Ovary (tissue), 10 donors: ENCODE measurements at regions of chr17 and their contacts with region 1.

Region 1: GRCh38 chr17:76307299-76307965 is 644 bp downstream of the QRICH2 start:
- DNase-seq: peak in 1 of 5 donors; percentile 34
- H3K4me3 ChIP-seq: no peak overlapping the region
- H3K27ac ChIP-seq: no peak overlapping the region
- H3K4me1 ChIP-seq: no peaks in the 10 kb centered on the region
- H3K27me3 ChIP-seq: no peaks in the 10 kb centered on the region
- CTCF ChIP-seq: no peak
- EP300 ChIP-seq: no peak
- POLR2A ChIP-seq: no peak

Region 2: DNA sequence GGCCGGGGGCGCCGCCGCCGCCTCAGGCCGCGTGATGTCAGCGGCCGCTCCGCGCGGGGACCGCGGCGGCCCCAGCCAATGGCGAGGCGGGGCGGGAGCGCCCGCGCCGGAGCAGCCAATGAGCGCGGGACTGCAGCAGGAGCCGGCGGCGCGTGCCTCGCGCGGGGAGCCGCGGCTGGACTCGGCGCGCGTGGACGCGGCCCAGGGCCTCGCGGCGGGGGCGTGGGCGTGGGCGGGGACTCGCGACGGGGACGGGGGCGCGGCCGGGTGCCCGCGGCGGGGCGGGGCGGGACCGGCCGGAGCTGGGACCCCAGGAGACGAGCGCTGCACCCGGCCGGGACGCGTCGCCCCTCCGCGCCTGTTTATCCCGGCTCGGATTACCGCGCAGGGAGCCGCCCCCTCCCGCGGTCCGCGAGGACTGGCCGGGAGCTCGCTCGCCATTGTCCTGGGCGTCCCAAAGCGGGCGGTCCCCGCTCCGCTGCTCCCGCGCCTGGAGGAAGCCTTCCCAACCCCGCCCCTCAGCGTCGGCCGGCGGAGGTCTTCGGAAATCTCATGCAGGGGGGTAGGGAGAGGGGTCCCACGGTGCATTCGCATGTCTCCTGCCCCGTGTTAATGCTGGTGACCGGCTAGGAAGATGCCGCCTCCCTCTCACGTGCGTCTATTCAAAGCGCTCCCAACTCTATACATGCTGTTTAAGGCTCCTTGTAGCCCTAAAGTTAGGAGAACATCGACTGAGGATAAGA is 66.8 kb before region 1 on chr17 and contains the start of gene RNF157:
- intact Hi-C with region 1: no loop called
- DNase-seq: peak; percentile 33 to 72 (median 51)
- H3K4me3 ChIP-seq: peak within 1 kb of the TSS; percentile 46
- H3K27ac ChIP-seq: no peak within 1 kb of the TSS
- H3K4me1 ChIP-seq: no peaks in the 10 kb centered on the region
- H3K27me3 ChIP-seq: no peaks in the 10 kb centered on the region
- CTCF ChIP-seq: no peak
- EP300 ChIP-seq: no peak
- POLR2A ChIP-seq: no peak
- total RNA-seq, gene RNF157: 1.3 to 4.3 (median 2.6) TPM

Region 3: DNA sequence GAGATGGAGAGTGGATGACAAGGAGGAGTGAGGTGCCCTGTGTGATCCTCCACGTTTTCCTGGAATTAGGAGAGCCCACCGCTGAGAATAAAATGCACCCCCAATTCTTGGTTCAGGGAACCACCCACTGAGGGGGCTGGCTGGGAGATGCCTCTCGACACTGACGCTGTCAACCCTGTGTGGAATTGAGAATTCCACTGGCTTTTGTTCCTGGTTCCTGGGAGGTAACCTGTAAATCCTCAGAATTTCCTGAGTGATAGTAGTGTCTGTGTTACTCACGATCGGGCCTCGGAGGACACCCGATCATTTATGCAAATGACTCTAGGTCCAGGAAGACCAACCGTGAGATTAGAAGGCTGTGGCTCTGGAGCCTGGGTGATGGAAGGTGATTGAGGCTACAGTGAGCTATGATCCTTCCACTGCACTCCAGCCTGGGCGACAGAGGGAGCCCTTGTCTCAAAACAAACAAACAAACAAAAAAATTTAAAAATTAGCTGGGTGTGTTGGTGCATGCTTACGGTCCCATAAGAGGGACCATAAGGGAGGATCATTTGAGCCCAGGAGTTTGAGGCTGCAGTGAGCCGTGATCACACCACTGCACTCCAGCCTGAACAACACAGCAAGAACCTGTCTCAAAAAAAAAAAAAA is 57.9 kb after region 1 on chr17:
- intact Hi-C with region 1: no loop called
- DNase-seq: no peak
- H3K4me3 ChIP-seq: no peak overlapping the region
- H3K27ac ChIP-seq: no peak overlapping the region
- H3K4me1 ChIP-seq: no peaks in the 10 kb centered on the region
- H3K27me3 ChIP-seq: no peaks in the 10 kb centered on the region
- CTCF ChIP-seq: no peak
- EP300 ChIP-seq: no peak
- POLR2A ChIP-seq: no peak

Region 4: DNA sequence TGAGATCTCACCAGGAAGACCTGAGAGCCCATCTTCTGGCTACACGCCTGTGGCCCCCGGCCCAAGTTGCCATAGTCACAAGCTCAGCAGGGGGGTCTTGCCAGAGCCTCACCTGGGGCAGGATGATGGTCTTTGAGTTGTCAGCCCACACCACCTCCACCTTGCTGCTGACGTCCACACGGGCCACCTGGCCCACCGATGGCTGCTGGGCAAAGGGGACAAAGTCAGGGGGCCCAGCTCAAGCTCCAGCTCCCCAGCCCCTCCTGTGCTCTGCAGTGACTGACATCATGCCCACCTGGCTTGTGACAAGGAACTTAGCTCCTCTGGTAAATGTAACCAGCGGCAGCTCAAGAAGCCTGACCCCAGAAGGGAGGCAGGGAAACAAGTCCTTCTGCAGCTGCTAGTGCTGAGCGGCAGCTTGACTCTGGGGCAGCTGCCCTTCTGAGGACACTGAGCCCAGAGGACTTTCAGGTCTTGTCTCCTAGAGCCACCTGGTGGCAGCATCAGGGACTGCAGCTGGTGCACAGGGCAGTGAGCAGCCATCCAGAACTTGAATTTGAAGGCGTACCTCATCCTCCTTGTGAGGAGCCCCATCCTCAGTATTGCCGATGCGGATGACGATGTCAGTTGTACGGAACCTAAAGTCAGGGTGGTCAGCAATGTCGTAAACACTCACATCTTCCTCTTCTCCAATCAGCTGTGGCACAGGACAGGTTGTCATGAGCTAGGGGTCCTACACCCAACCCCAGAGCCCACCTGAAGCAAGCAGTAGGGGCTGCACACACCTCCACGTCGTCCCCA is 90.5 kb after region 1 on chr17:
- intact Hi-C with region 1: loop called (anchors 1 to 5 kb)
- DNase-seq: peak; percentile 80 to 92 (median 90)
- H3K4me3 ChIP-seq: no peak overlapping the region
- H3K27ac ChIP-seq: no peak overlapping the region
- H3K4me1 ChIP-seq: no peaks in the 10 kb centered on the region
- H3K27me3 ChIP-seq: no peaks in the 10 kb centered on the region
- CTCF ChIP-seq: peak; percentile 91 to 96 (median 92)
- EP300 ChIP-seq: no peak
- POLR2A ChIP-seq: no peak

Region 5: GRCh38 chr17:76501018-76501826 is 193.8 kb after region 1 on chr17 and contains the start of gene RHBDF2:
- intact Hi-C with region 1: loop called in 2 of 4 experiments (anchors 2 to 10 kb)
- DNase-seq: peak; percentile 89 to 97 (median 94)
- H3K4me3 ChIP-seq: peak within 1 kb of the TSS; percentile 38
- H3K27ac ChIP-seq: peak within 1 kb of the TSS; percentile 23 to 80
- H3K4me1 ChIP-seq: peaks cover 25% of the 10 kb centered on the region
- H3K27me3 ChIP-seq: no peaks in the 10 kb centered on the region
- CTCF ChIP-seq: no peak
- EP300 ChIP-seq: no peak
- POLR2A ChIP-seq: no peak
- total RNA-seq, gene RHBDF2: 11.7 to 39.9 (median 26.1) TPM

Region 6: GRCh38 chr17:76506408-76507349 is 199.2 kb after region 1 on chr17:
- intact Hi-C with region 1: loop called in 2 of 4 experiments (anchors 2 to 10 kb)
- DNase-seq: peak; percentile 74 to 92 (median 88)
- H3K4me3 ChIP-seq: no peak overlapping the region
- H3K27ac ChIP-seq: no peak overlapping the region
- H3K4me1 ChIP-seq: peaks cover 4% of the 10 kb centered on the region
- H3K27me3 ChIP-seq: no peaks in the 10 kb centered on the region
- CTCF ChIP-seq: peak; percentile 80 to 96 (median 96)
- EP300 ChIP-seq: no peak
- POLR2A ChIP-seq: peak; percentile 11